CD4-positive, alpha-beta T cell (primary cell): ENCODE measurements at regions of chr12 and their contacts with region 1.

Region 1: DNA sequence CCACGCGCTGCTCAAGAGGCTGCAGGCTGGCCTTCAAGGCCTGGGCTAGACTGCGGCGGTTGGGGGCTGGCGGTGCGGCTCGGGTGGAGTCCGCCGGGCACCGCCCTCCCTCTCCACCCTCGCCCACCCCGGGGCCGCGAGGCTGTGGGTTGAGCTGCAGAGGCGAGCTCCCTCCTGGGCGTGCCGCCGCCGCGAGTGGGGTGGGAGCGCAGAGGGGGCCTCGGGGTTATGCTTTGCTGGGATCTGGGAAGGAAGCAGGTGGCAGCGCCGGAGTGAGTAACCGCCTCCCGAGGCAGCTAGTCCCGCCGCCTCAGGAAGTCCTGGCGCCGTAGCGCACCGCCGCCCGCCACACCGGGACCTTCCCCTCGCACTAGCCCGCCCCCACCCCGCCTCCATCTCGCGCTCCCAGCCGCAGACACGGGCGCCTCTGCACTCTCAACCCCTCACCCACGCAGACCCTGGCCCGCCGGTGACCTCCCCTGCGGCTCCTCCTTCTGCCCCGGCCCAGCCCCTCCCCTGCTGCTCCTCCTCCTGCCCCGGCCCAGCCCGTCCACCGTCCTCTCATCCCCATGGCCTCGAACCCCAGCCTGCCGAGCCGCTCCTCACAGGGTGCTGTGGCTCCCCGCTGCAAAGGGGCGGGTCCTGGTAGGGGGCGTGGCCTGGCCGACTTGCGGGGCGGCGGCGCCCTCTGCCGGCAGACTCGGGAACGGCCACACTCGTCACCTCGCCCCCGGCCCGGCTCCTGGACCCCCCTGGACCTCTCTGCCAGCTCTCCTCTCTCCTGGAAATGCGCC is 16.6 kb downstream of the TAMALIN start:
- DNase-seq: peak; percentile 87 to 97 (median 89)
- ATAC-seq: peak; percentile 62
- H3K4me3 ChIP-seq: peak overlapping the region; percentile 54
- H3K4me3 Mint-ChIP-seq: peak overlapping the region; percentile 89
- H3K27ac ChIP-seq: peak overlapping the region; percentile 52 to 78
- H3K27ac Mint-ChIP-seq: peak overlapping the region; percentile 77
- H3K4me1 ChIP-seq: peaks cover 46% of the 10 kb centered on the region
- H3K4me1 Mint-ChIP-seq: peaks cover 39% of the 10 kb centered on the region
- H3K27me3 ChIP-seq: no peaks in the 10 kb centered on the region
- H3K27me3 Mint-ChIP-seq: no peaks in the 10 kb centered on the region
- CTCF ChIP-seq: peak; percentile 95

Region 2: DNA sequence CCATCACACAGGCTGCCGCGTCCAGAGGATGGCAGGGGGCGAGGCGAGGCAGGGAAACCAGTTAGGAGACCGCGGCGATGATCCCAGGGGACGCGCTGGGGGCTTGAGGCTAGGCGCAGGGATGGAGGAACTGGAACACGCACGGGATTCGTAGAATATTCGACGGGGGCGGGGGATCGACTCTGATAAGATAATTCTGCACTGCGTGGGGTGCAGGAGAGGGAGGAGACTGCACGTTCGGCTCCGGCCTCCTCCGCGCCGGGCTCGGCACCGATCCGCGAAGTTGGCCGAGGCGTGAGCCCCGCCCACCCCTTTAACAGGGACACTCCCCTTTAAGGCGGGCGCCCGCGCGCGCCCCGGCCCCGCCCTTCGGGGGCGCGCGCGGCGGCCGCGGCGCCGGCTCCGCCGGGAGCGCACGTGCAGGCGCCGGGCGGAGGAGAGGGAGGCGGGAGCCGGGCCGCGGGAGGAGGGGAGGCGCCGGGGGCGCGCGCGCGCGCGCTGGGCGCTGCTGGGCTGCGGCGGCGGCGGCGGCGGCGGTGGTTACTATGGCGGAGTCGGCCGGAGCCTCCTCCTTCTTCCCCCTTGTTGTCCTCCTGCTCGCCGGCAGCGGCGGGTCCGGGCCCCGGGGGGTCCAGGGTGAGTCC is 72.1 kb before region 1 on chr12 and contains the start of gene ACVR1B:
- CTCF ChIA-PET with region 1: interaction called, 11 read pairs
- POLR2A ChIA-PET with region 1: no interaction called
- intact Hi-C with region 1: loop called in 1 of 2 experiments (anchors 5 kb)
- DNase-seq: peak; percentile 84 to 96 (median 90)
- ATAC-seq: peak; percentile 96
- H3K4me3 ChIP-seq: peak within 1 kb of the TSS; percentile 75
- H3K4me3 Mint-ChIP-seq: peak within 1 kb of the TSS; percentile 97
- H3K27ac ChIP-seq: peak within 1 kb of the TSS in 1 of 2 donors; percentile 54
- H3K27ac Mint-ChIP-seq: peak within 1 kb of the TSS; percentile 91
- H3K4me1 ChIP-seq: peaks cover 24% of the 10 kb centered on the region
- H3K4me1 Mint-ChIP-seq: peaks cover 51% of the 10 kb centered on the region
- H3K27me3 ChIP-seq: peaks cover 0 to 2% of the 10 kb centered on the region in 2 experiments
- H3K27me3 Mint-ChIP-seq: no peaks in the 10 kb centered on the region
- CTCF ChIP-seq: no peak
- total RNA-seq, gene ACVR1B: 14.2 to 14.5 TPM

Region 3: GRCh38 chr12:51994959-51995358 is 28.4 kb before region 1 on chr12:
- CTCF ChIA-PET with region 1: interaction called, 164 read pairs
- POLR2A ChIA-PET with region 1: interaction called, 10 read pairs
- intact Hi-C with region 1: loop called (anchors 1 kb)
- DNase-seq: no peak
- ATAC-seq: no peak
- H3K4me3 ChIP-seq: no peak overlapping the region
- H3K4me3 Mint-ChIP-seq: no peak overlapping the region
- H3K27ac ChIP-seq: no peak overlapping the region
- H3K27ac Mint-ChIP-seq: no peak overlapping the region
- H3K4me1 ChIP-seq: peaks cover 3% of the 10 kb centered on the region
- H3K4me1 Mint-ChIP-seq: no peaks in the 10 kb centered on the region
- H3K27me3 ChIP-seq: no peaks in the 10 kb centered on the region
- H3K27me3 Mint-ChIP-seq: no peaks in the 10 kb centered on the region
- CTCF ChIP-seq: no peak

Region 4: DNA sequence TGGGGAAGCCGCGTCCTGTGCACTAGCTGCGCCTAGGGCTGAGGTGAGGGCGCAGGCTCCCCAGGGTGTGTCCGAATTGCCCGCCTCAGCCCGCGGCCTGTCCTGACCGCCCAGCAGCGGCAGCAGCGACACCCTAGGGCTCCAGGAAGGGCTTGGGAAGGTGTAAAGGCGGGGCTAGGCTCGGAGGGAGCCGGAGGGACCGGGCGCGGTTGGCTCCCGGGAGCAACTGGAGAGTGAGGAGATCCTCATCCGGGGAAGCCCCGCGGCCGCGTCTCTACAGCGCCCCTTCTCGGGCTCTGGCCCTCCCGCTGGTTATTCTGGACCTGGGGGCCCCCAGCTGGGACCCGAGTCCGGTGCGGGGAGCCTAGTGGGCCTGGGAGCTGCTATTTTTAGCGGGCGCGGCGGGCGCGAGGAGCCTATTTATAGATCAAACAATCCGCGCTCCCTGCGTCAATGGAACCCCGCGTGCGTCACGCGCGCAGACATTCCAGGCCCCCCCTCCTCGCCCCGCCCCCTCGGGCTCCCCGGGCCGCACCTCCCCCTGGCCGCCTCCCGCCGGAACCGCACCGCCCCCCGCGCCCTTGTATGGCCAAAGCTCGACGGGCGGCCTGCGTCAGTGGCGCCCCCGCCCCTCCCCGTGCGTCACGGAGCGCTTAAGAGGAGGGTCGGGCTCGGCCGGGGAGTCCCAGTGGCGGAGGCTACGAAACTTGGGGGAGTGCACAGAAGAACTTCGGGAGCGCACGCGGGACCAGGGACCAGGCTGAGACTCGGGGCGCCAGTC is 27.6 kb after region 1 on chr12 and contains the start of gene NR4A1:
- CTCF ChIA-PET with region 1: interaction called, 62 read pairs
- POLR2A ChIA-PET with region 1: interaction called, 20 read pairs
- intact Hi-C with region 1: loop called in 1 of 2 experiments (anchors 1 kb)
- DNase-seq: peak; percentile 96 to 100 (median 99)
- ATAC-seq: peak; percentile 84
- H3K4me3 ChIP-seq: peak within 1 kb of the TSS; percentile 86
- H3K4me3 Mint-ChIP-seq: peak within 1 kb of the TSS; percentile 93
- H3K27ac ChIP-seq: peak within 1 kb of the TSS; percentile 91 to 98
- H3K27ac Mint-ChIP-seq: peak within 1 kb of the TSS; percentile 98
- H3K4me1 ChIP-seq: peaks cover 36% of the 10 kb centered on the region
- H3K4me1 Mint-ChIP-seq: peaks cover 41% of the 10 kb centered on the region
- H3K27me3 ChIP-seq: no peaks in the 10 kb centered on the region
- H3K27me3 Mint-ChIP-seq: no peaks in the 10 kb centered on the region
- CTCF ChIP-seq: no peak
- total RNA-seq, gene NR4A1: 67.0 to 79.2 TPM

Region 5: GRCh38 chr12:52069327-52070184 is 46.2 kb after region 1 on chr12 and contains the start of gene ATG101:
- CTCF ChIA-PET with region 1: interaction called, 149 read pairs
- POLR2A ChIA-PET with region 1: interaction called, 51 read pairs
- intact Hi-C with region 1: loop called (anchors 1 to 2 kb)
- DNase-seq: peak; percentile 75 to 96 (median 82)
- ATAC-seq: peak; percentile 90
- H3K4me3 ChIP-seq: peak within 1 kb of the TSS; percentile 98
- H3K4me3 Mint-ChIP-seq: peak within 1 kb of the TSS; percentile 93
- H3K27ac ChIP-seq: peak within 1 kb of the TSS; percentile 78 to 94
- H3K27ac Mint-ChIP-seq: peak within 1 kb of the TSS; percentile 93
- H3K4me1 ChIP-seq: peaks cover 41% of the 10 kb centered on the region
- H3K4me1 Mint-ChIP-seq: peaks cover 49% of the 10 kb centered on the region
- H3K27me3 ChIP-seq: no peaks in the 10 kb centered on the region
- H3K27me3 Mint-ChIP-seq: no peaks in the 10 kb centered on the region
- CTCF ChIP-seq: peak; percentile 76
- total RNA-seq, gene ATG101: 20.6 to 20.9 TPM

Region 6: DNA sequence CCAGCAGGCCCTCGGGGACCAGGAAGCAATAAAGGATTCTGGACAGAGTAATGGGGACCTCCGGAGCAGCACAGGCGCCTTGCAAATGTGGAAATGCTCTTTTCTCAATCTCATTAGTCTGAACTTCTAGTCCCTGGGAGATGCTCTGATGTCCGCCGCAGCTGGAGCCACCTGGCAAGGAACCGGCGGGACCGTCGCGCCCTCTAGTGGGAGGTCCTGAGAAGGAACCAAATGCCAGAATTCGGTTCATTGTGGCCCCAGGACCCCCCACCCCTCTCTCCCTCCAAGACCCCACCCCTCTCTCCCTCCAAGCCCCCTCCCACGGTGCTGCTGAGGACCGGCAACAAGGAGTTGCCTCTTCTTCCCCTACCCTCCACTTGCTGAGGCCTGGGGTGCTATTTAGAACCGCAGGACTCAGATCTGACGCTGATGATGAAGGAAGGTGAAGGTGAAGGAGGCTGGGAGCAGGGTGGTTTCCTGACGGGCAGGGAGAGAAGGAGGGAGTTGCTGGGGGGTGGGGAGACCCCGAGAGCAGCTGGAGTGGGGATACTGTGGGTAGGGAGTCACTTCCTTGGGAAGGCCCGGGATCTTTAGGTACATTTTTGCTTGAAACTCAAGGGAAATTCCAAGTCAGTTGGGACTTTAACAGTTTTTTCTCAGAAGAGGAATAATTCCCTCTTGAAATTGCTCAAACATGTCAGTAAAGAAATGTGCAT is 98.6 kb after region 1 on chr12:
- CTCF ChIA-PET with region 1: interaction called, 15 read pairs
- POLR2A ChIA-PET with region 1: no interaction called
- intact Hi-C with region 1: loop called in 1 of 2 experiments (anchors 1 kb)
- DNase-seq: peak; percentile 39 to 79 (median 57)
- ATAC-seq: peak; percentile 58
- H3K4me3 ChIP-seq: no peak overlapping the region
- H3K4me3 Mint-ChIP-seq: no peak overlapping the region
- H3K27ac ChIP-seq: no peak overlapping the region
- H3K27ac Mint-ChIP-seq: no peak overlapping the region
- H3K4me1 ChIP-seq: peaks cover 17% of the 10 kb centered on the region
- H3K4me1 Mint-ChIP-seq: peaks cover 7% of the 10 kb centered on the region
- H3K27me3 ChIP-seq: peaks cover 5 to 8% of the 10 kb centered on the region in 2 experiments
- H3K27me3 Mint-ChIP-seq: peaks cover 50% of the 10 kb centered on the region
- CTCF ChIP-seq: peak; percentile 89